Calu3 (cell line): ENCODE measurements at regions of chr1 and their contacts with region 1.

Region 1: GRCh38 chr1:207259391-207259790 is 62.1 kb upstream of the CD55 start:
- DNase-seq: peak; percentile 33
- H3K4me3 Mint-ChIP-seq: no peak overlapping the region
- H3K27ac Mint-ChIP-seq: no peak overlapping the region
- H3K4me1 Mint-ChIP-seq: no peaks in the 10 kb centered on the region
- H3K27me3 Mint-ChIP-seq: no peaks in the 10 kb centered on the region
- CTCF ChIP-seq: peak; percentile 49

Region 2: GRCh38 chr1:207181838-207182237 is 77.6 kb before region 1 on chr1:
- CTCF ChIA-PET with region 1: no interaction called
- intact Hi-C with region 1: loop called (anchors 5 kb)
- DNase-seq: no peak
- H3K4me3 Mint-ChIP-seq: no peak overlapping the region
- H3K27ac Mint-ChIP-seq: no peak overlapping the region
- H3K4me1 Mint-ChIP-seq: peaks cover 5% of the 10 kb centered on the region
- H3K27me3 Mint-ChIP-seq: no peaks in the 10 kb centered on the region
- CTCF ChIP-seq: no peak